ENCODE measurements at regions of chr22 and their contacts with region 1.

Region 1: DNA sequence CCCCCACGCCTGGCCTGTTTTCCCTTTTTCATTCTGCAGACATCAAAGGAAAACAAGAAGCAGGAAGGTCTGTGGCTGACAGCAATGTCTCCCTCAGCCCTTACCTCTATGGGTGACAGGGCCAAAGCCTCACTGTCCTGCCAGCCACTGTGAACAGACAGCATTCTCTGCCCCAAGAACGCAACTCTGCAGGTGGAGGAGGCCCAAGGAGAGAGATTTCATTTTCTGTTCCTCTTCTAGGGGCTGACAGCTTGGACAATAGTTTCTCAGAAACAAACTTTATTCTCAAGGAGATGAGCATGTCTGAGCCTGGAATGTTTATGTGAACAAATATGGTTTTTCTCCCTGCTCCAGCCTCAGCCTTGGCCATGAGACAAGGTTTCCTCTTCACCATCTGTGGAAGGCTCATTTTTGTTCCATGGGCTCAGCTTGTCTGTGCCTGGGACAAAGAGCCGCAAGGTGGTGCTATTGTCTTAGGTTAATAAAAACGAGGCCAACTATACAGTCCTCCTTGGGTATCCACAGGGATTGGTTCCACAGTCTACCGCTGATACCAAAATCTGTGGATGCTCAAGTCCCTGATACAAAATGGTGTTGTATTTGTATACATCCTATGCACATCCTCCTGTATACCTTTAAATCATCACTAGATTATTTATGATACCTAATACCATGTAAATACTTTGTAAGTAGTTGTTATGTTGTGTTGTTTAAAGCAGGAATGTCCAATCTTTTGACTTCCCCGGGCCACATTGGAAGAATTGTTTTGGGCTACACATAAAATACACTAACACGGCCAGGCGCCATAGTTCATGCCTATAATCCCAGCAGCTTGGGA is 5.8 kb downstream of the PIWIL3 start:
- DNase-seq: peak; percentile 68
- ATAC-seq: peak; percentile 92
- H3K4me3 ChIP-seq: no peak overlapping the region
- H3K27ac ChIP-seq: no peak overlapping the region
- H3K4me1 ChIP-seq: no peaks in the 10 kb centered on the region
- H3K27me3 ChIP-seq: no peaks in the 10 kb centered on the region
- CTCF ChIP-seq: peak; percentile 78

Region 2: GRCh38 chr22:24789516-24789915 is 20.8 kb after region 1 on chr22:
- CTCF ChIA-PET with region 1: no interaction called
- POLR2A ChIA-PET with region 1: no interaction called
- intact Hi-C with region 1: no loop called
- DNase-seq: no peak
- ATAC-seq: no peak
- H3K4me3 ChIP-seq: no peak overlapping the region
- H3K27ac ChIP-seq: no peak overlapping the region
- H3K4me1 ChIP-seq: no peaks in the 10 kb centered on the region
- H3K27me3 ChIP-seq: no peaks in the 10 kb centered on the region
- CTCF ChIP-seq: no peak

Region 3: GRCh38 chr22:24805790-24806662 is 37.3 kb after region 1 on chr22 and contains the start of gene SGSM1:
- CTCF ChIA-PET with region 1: interaction called, 14 read pairs
- POLR2A ChIA-PET with region 1: no interaction called
- intact Hi-C with region 1: no loop called
- DNase-seq: peak; percentile 71
- ATAC-seq: peak; percentile 90
- H3K4me3 ChIP-seq: peak within 1 kb of the TSS; percentile 67
- H3K27ac ChIP-seq: no peak within 1 kb of the TSS
- H3K4me1 ChIP-seq: no peaks in the 10 kb centered on the region
- H3K27me3 ChIP-seq: no peaks in the 10 kb centered on the region
- CTCF ChIP-seq: no peak
- total RNA-seq, gene SGSM1: 0.29 and 0.35 TPM in 2 replicates

Region 4: GRCh38 chr22:24834845-24835570 is 66.3 kb after region 1 on chr22:
- CTCF ChIA-PET with region 1: no interaction called
- POLR2A ChIA-PET with region 1: no interaction called
- intact Hi-C with region 1: loop called (anchors 1 kb)
- DNase-seq: peak; percentile 12
- ATAC-seq: no peak
- H3K4me3 ChIP-seq: no peak overlapping the region
- H3K27ac ChIP-seq: no peak overlapping the region
- H3K4me1 ChIP-seq: no peaks in the 10 kb centered on the region
- H3K27me3 ChIP-seq: no peaks in the 10 kb centered on the region
- CTCF ChIP-seq: peak; percentile 39; the same call in 1 of the 2 replicates

Region 5: DNA sequence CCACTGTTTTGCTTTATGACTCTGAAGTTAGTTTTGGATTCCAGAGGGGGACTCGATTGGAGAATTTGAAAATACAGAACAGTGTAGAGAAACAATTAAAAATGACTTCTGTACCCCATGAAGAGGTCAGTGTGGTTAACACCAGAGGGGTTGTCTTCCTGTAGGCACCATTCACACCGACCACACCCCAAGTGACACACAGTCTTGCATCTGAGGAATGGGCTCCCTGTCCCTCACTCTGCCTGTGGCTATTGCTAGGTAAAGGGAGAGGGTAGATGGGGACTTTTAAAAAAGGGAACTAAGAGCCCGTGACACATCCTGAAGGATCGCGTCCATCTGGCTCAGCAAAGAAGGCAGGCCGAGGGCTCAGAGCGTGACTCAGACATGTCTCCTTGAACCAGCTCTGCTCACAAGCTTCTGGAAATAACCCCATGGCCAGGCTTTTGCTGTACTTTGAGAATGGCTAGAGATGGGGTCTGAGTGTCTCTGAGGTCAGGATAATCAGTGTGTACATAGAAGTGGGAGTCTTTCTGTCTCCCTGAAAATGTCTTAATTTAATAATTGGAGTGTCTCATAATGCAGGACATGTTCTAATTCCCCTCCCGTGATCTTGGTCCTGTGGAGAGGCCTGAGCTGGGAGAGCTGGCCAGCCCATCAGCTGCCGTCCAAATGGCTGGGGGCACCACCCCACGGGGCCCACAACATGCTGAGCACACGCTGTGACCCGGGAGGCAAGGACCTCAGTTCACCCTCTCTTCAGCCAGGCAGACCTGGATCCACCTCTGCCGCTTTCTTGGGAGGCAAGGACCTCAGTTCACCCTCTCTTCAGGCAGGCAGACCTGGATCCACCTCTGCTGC is 76.5 kb after region 1 on chr22:
- CTCF ChIA-PET with region 1: no interaction called
- POLR2A ChIA-PET with region 1: no interaction called
- intact Hi-C with region 1: loop called (anchors 1 kb)
- DNase-seq: peak; percentile 3
- ATAC-seq: no peak
- H3K4me3 ChIP-seq: no peak overlapping the region
- H3K27ac ChIP-seq: no peak overlapping the region
- H3K4me1 ChIP-seq: no peaks in the 10 kb centered on the region
- H3K27me3 ChIP-seq: no peaks in the 10 kb centered on the region
- CTCF ChIP-seq: no peak

Region 6: DNA sequence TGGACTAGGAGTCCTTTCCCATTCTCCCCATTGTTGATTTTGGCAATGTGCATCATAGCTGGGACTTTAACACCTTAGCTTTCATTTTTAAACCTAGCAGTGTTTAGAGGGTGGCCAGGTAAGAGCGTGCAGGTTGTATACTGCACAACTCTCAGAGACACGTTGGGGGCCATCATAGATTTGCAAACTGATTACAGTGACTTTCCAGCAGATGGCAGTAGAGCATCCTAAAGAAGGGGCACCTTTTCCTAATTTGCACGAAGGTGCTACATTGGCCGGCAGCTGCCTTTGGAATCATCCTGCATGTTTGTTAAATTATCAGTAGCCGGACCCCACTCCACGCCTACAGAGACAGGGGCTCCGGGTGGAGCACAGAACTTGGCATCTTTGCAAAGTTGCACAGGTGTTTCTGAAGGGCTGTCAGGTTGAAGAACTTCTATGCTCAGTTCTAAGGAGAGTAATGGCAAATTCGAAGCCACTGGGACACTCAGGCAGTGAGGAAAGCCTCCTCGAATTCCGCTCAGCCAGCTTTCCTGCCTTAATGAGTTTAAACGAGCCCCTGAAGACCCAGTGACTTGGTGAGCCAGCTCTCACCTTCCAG is 170.1 kb after region 1 on chr22:
- CTCF ChIA-PET with region 1: no interaction called
- POLR2A ChIA-PET with region 1: no interaction called
- intact Hi-C with region 1: loop called (anchors 5 kb)
- DNase-seq: peak; percentile 72
- ATAC-seq: peak; percentile 58
- H3K4me3 ChIP-seq: no peak overlapping the region
- H3K27ac ChIP-seq: no peak overlapping the region
- H3K4me1 ChIP-seq: peaks cover 5% of the 10 kb centered on the region; the same call in 1 of the 2 replicates
- H3K27me3 ChIP-seq: no peaks in the 10 kb centered on the region
- CTCF ChIP-seq: peak; percentile 74

Region 7: GRCh38 chr22:25081409-25081824 is 312.7 kb after region 1 on chr22:
- CTCF ChIA-PET with region 1: no interaction called
- POLR2A ChIA-PET with region 1: no interaction called
- intact Hi-C with region 1: no loop called
- DNase-seq: peak; percentile 33
- ATAC-seq: no peak
- H3K4me3 ChIP-seq: no peak overlapping the region
- H3K27ac ChIP-seq: no peak overlapping the region
- H3K4me1 ChIP-seq: no peaks in the 10 kb centered on the region
- H3K27me3 ChIP-seq: no peaks in the 10 kb centered on the region
- CTCF ChIP-seq: peak; percentile 69

Measured in PC-3 (cell line).